ENCODE measurements at regions of chr17 and their contacts with region 1.

Region 1: GRCh38 chr17:64975329-64976087 is 56.2 kb upstream of the LRRC37A3 start:
- DNase-seq: peak; percentile 95
- ATAC-seq: peak; percentile 87
- H3K4me3 ChIP-seq: peak overlapping the region; percentile 85
- H3K27ac ChIP-seq: peak overlapping the region; percentile 93
- H3K4me1 ChIP-seq: peaks cover 31% of the 10 kb centered on the region
- H3K27me3 ChIP-seq: no peaks in the 10 kb centered on the region
- CTCF ChIP-seq: no peak
- EP300 ChIP-seq: peak; percentile 59 to 64; a peak in 2 of 4 replicates
- POLR2A ChIP-seq: peak; percentile 83
- RAD21 ChIP-seq: no peak

Region 2: GRCh38 chr17:65055348-65056261 is 80.1 kb after region 1 on chr17:
- CTCF ChIA-PET with region 1: interaction called, 3 read pairs
- POLR2A ChIA-PET with region 1: interaction called, 6 read pairs
- RAD21 ChIA-PET with region 1: interaction called, 11 read pairs
- SMC1A ChIA-PET with region 1: interaction called, 5 read pairs
- in situ Hi-C with region 1: no loop called
- intact Hi-C with region 1: loop called (anchors 2 kb)
- DNase-seq: no peak
- ATAC-seq: peak; percentile 65
- H3K4me3 ChIP-seq: peak overlapping the region; percentile 98
- H3K27ac ChIP-seq: peak overlapping the region; percentile 95
- H3K4me1 ChIP-seq: peaks cover 5% of the 10 kb centered on the region; the same call in 1 of the 2 replicates
- H3K27me3 ChIP-seq: no peaks in the 10 kb centered on the region
- CTCF ChIP-seq: no peak
- EP300 ChIP-seq: no peak
- POLR2A ChIP-seq: no peak; the same call in 1 of the 2 replicates
- RAD21 ChIP-seq: no peak

Region 3: GRCh38 chr17:65092262-65092661 is 116.8 kb after region 1 on chr17:
- CTCF ChIA-PET with region 1: no interaction called
- POLR2A ChIA-PET with region 1: no interaction called
- RAD21 ChIA-PET with region 1: no interaction called
- SMC1A ChIA-PET with region 1: no interaction called
- in situ Hi-C with region 1: no loop called
- intact Hi-C with region 1: no loop called
- DNase-seq: no peak
- ATAC-seq: no peak
- H3K4me3 ChIP-seq: no peak overlapping the region
- H3K27ac ChIP-seq: no peak overlapping the region
- H3K4me1 ChIP-seq: no peaks in the 10 kb centered on the region
- H3K27me3 ChIP-seq: no peaks in the 10 kb centered on the region
- CTCF ChIP-seq: no peak
- EP300 ChIP-seq: no peak
- POLR2A ChIP-seq: no peak
- RAD21 ChIP-seq: no peak

Region 4: DNA sequence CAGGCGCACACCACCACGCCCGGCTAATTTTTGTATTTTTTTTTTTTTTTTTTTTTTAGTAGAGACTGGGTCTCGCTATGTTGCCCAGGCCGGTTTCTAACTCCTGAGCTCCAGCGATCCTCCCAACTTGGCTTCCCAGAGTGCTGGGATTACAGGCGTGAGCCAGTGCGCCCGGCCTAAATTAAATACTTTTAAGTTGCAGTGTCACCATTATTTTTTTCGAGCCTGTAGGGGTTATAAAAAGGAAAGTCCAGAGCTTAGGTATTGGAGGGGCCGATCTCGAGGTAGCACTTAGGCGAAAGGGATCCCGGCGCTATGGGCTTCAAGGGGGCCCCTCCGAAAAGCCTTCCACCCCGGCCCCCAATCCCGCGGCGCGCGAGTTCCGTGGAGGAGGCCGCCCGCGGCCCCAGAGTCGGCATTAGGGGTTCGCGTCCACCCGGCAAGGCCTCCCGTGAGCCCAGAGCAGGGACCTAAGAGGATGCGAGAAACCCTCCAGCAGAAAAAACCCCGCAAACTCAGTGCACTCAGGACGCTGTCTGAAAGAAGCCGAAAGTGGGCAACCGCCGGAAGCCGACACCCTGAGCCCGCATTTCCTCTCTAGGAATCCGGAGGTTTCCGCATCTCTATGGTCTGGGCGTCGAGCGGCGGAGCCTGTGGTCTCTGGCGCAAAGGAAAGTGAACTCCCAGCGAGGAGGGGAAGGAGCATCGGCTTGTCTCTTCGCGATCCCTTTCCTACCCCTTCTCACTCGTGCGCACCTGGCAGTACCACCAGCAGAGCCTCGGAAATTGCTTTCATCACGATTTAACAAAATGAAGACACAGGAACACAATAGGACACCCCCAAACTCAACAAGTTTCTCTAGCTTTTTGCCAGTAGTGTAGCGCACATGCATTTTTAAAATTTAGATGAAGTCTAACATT is 147.6 kb after region 1 on chr17:
- CTCF ChIA-PET with region 1: no interaction called
- POLR2A ChIA-PET with region 1: no interaction called
- RAD21 ChIA-PET with region 1: no interaction called
- SMC1A ChIA-PET with region 1: no interaction called
- in situ Hi-C with region 1: no loop called
- intact Hi-C with region 1: loop called (anchors 5 kb)
- DNase-seq: peak; percentile 66
- ATAC-seq: peak; percentile 77
- H3K4me3 ChIP-seq: peak overlapping the region; percentile 60
- H3K27ac ChIP-seq: peak overlapping the region; percentile 73
- H3K4me1 ChIP-seq: peaks cover 20% of the 10 kb centered on the region
- H3K27me3 ChIP-seq: no peaks in the 10 kb centered on the region
- CTCF ChIP-seq: no peak
- EP300 ChIP-seq: no peak
- POLR2A ChIP-seq: peak; percentile 90
- RAD21 ChIP-seq: no peak

Region 5: GRCh38 chr17:65561394-65562205 is 586.1 kb after region 1 on chr17 and contains the start of gene AXIN2:
- CTCF ChIA-PET with region 1: interaction called, 4 read pairs
- POLR2A ChIA-PET with region 1: no interaction called
- RAD21 ChIA-PET with region 1: no interaction called
- SMC1A ChIA-PET with region 1: no interaction called
- in situ Hi-C with region 1: loop called (anchors 25 kb)
- intact Hi-C with region 1: no loop called
- DNase-seq: no peak
- ATAC-seq: peak; percentile 79
- H3K4me3 ChIP-seq: peak within 1 kb of the TSS; percentile 81; the same call in 1 of the 2 replicates
- H3K27ac ChIP-seq: peak within 1 kb of the TSS; percentile 62
- H3K4me1 ChIP-seq: peaks cover 19% of the 10 kb centered on the region
- H3K27me3 ChIP-seq: peaks cover 0 to 5% of the 10 kb centered on the region in 2 experiments; a peak in 2 of 4 replicates
- CTCF ChIP-seq: peak in 2 of 3 experiments; percentile 6 to 38; a peak in 1 of 6 replicates
- EP300 ChIP-seq: no peak
- POLR2A ChIP-seq: no peak
- RAD21 ChIP-seq: no peak
- polyA plus RNA-seq, gene AXIN2: 0.47 to 0.66 TPM

Measured in GM12878 (cell line).